PC-3 (cell line): ENCODE measurements at regions of chr18 and their contacts with region 1.

Region 1: GRCh38 chr18:35407871-35408481 is 30.8 kb upstream of the ZNF396 start:
- DNase-seq: peak; percentile 64
- ATAC-seq: peak; percentile 59
- H3K4me3 ChIP-seq: no peak overlapping the region
- H3K27ac ChIP-seq: no peak overlapping the region
- H3K4me1 ChIP-seq: peaks cover 14% of the 10 kb centered on the region
- H3K27me3 ChIP-seq: no peaks in the 10 kb centered on the region
- CTCF ChIP-seq: peak; percentile 69

Region 2: GRCh38 chr18:35264409-35264808 is 143.6 kb before region 1 on chr18:
- CTCF ChIA-PET with region 1: no interaction called
- POLR2A ChIA-PET with region 1: no interaction called
- intact Hi-C with region 1: no loop called
- DNase-seq: no peak
- ATAC-seq: no peak
- H3K4me3 ChIP-seq: no peak overlapping the region
- H3K27ac ChIP-seq: no peak overlapping the region
- H3K4me1 ChIP-seq: no peaks in the 10 kb centered on the region
- H3K27me3 ChIP-seq: no peaks in the 10 kb centered on the region
- CTCF ChIP-seq: no peak

Region 3: GRCh38 chr18:35334821-35335220 is 73.2 kb before region 1 on chr18:
- CTCF ChIA-PET with region 1: no interaction called
- POLR2A ChIA-PET with region 1: no interaction called
- intact Hi-C with region 1: no loop called
- DNase-seq: peak; percentile 10
- ATAC-seq: no peak
- H3K4me3 ChIP-seq: no peak overlapping the region
- H3K27ac ChIP-seq: no peak overlapping the region
- H3K4me1 ChIP-seq: no peaks in the 10 kb centered on the region
- H3K27me3 ChIP-seq: no peaks in the 10 kb centered on the region
- CTCF ChIP-seq: no peak

Region 4: GRCh38 chr18:35422237-35422636 is 14.3 kb after region 1 on chr18:
- CTCF ChIA-PET with region 1: no interaction called
- POLR2A ChIA-PET with region 1: no interaction called
- intact Hi-C with region 1: no loop called
- DNase-seq: no peak
- ATAC-seq: no peak
- H3K4me3 ChIP-seq: no peak overlapping the region
- H3K27ac ChIP-seq: no peak overlapping the region
- H3K4me1 ChIP-seq: no peaks in the 10 kb centered on the region
- H3K27me3 ChIP-seq: no peaks in the 10 kb centered on the region
- CTCF ChIP-seq: no peak

Region 5: DNA sequence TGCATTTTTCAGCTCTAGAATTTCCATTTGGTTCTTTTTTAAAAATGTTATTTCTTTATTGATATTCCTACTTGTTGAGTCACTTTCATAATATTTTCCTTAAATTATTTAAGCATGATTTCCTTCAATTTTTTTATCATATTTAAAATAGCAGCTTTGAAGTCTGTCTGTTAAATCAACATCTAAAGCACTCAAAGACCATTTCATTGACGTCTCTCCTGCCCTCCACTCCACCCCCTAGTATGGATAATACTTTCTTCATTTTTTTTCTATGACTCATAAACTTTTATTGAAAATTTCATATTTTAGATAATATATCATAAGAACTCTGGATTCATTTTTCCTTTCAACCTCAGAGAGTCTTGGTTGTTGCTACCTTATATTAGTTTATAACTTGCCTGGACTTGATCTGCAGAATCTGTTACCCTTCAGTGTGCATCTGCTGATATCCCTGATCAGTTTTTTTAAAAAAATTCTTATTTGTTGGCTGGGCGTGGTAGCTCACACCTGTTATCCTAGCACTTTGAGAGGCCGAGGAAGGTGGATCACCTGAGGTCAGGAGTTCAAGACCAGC is 28.2 kb after region 1 on chr18:
- CTCF ChIA-PET with region 1: no interaction called
- POLR2A ChIA-PET with region 1: no interaction called
- intact Hi-C with region 1: loop called (anchors 2 kb)
- DNase-seq: peak; percentile 68
- ATAC-seq: peak; percentile 73
- H3K4me3 ChIP-seq: no peak overlapping the region
- H3K27ac ChIP-seq: peak overlapping the region; percentile 90
- H3K4me1 ChIP-seq: peaks cover 39% of the 10 kb centered on the region
- H3K27me3 ChIP-seq: no peaks in the 10 kb centered on the region
- CTCF ChIP-seq: no peak

Region 6: DNA sequence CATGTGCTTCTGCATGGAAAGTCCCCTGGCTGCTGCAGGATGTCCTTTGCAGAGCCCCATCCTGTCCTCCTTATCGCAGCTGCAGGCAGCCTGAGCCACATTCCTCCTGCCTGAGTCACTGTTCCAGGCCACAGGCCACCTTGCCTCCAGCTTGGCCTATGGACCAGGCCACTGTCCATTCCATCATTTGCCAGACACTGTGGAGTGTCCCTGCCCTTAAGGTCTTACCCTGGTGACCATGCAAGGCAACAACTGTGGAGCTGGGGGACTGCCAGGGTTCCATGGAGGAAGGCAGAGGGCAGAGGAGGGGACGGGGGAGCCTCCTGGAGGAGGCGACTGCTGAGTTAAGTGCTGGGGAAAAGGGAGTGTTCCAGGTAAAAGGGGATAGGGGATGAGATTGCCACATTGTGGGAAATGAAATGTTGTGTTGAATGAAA is 51.0 kb after region 1 on chr18:
- CTCF ChIA-PET with region 1: no interaction called
- POLR2A ChIA-PET with region 1: no interaction called
- intact Hi-C with region 1: loop called (anchors 1 kb)
- DNase-seq: peak; percentile 71
- ATAC-seq: peak; percentile 61
- H3K4me3 ChIP-seq: no peak overlapping the region
- H3K27ac ChIP-seq: peak overlapping the region; percentile 84
- H3K4me1 ChIP-seq: peaks cover 75% of the 10 kb centered on the region
- H3K27me3 ChIP-seq: no peaks in the 10 kb centered on the region
- CTCF ChIP-seq: no peak

Region 7: DNA sequence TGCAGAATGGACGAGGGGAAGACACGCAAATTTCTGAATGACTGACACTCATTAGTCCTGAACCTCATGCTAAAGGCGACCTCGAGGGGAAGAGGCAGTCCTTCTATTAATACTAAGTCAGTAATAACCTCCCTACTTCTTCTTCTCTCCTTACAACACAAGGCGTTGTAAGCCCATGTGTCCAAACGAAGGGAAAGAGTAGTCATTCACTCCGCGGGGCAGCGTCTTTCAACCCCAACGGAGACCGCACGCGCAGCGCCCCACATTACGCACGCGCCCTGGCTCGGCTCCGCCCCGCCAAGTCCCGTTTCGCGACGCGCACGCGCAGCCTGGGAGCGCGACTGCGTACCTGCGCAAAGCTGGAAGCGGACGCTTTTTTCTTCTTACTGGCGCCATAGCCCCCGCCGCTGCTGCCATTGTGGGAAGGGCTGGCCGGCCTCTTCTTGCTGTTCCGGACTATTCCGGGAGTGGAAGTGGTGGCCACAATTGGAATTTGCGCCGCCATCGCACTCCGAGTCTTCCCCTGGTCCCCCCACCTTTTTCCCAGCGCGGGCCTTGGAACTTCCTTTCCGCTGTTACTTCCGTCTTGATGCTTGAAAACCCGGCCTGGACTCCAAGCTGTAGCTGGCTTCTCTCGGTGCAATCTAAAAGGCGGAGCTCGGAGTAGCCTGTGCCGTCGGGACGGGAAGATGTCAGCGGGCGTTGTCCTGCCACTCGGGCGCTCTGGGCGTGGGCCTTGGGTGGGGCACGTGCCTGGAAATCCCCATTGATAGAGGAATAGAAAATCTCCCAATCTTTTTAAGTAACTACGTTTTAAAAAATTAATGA is 89.6 kb after region 1 on chr18 and contains the start of gene INO80C:
- CTCF ChIA-PET with region 1: no interaction called
- POLR2A ChIA-PET with region 1: no interaction called
- intact Hi-C with region 1: loop called (anchors 5 kb)
- DNase-seq: peak; percentile 75
- ATAC-seq: peak; percentile 89
- H3K4me3 ChIP-seq: peak within 1 kb of the TSS; percentile 74
- H3K27ac ChIP-seq: peak within 1 kb of the TSS; percentile 87
- H3K4me1 ChIP-seq: peaks cover 22% of the 10 kb centered on the region
- H3K27me3 ChIP-seq: no peaks in the 10 kb centered on the region
- CTCF ChIP-seq: no peak
- total RNA-seq, gene INO80C: 6.8 and 16.1 TPM in 2 replicates